Aorta (tissue), 5 donors: ENCODE measurements at regions of chr9 and their contacts with region 1.

Region 1: GRCh38 chr9:91207729-91208418 is 153.8 kb downstream of the AUH start:
- DNase-seq: no peak
- ATAC-seq: peak; percentile 79
- H3K4me3 ChIP-seq: peak overlapping the region in 1 of 2 donors; percentile 23
- H3K27ac ChIP-seq: peak overlapping the region in 1 of 2 donors; percentile 34
- H3K4me1 ChIP-seq: peaks cover 0 to 3% of the 10 kb centered on the region in 2 donors
- H3K27me3 ChIP-seq: no peaks in the 10 kb centered on the region

Region 2: GRCh38 chr9:90722071-90722470 is 485.8 kb before region 1 on chr9:
- intact Hi-C with region 1: no loop called
- DNase-seq: no peak
- ATAC-seq: no peak
- H3K4me3 ChIP-seq: no peak overlapping the region
- H3K27ac ChIP-seq: no peak overlapping the region
- H3K4me1 ChIP-seq: no peaks in the 10 kb centered on the region
- H3K27me3 ChIP-seq: no peaks in the 10 kb centered on the region

Region 3: GRCh38 chr9:91361291-91362050 is 153.6 kb after region 1 on chr9 and contains the start of gene AUH:
- intact Hi-C with region 1: loop called in 1 of 2 experiments (anchors 5 kb)
- DNase-seq: peak; percentile 90 to 96
- ATAC-seq: peak; percentile 97
- H3K4me3 ChIP-seq: peak within 1 kb of the TSS; percentile 85 to 96
- H3K27ac ChIP-seq: peak within 1 kb of the TSS in 1 of 2 donors; percentile 58
- H3K4me1 ChIP-seq: peaks cover 0 to 2% of the 10 kb centered on the region in 2 donors
- H3K27me3 ChIP-seq: no peaks in the 10 kb centered on the region
- total RNA-seq, gene AUH: 13.7 to 25.7 TPM